SK-N-SH (cell line): ENCODE measurements at regions of chr1 and their contacts with region 1.

Region 1: DNA sequence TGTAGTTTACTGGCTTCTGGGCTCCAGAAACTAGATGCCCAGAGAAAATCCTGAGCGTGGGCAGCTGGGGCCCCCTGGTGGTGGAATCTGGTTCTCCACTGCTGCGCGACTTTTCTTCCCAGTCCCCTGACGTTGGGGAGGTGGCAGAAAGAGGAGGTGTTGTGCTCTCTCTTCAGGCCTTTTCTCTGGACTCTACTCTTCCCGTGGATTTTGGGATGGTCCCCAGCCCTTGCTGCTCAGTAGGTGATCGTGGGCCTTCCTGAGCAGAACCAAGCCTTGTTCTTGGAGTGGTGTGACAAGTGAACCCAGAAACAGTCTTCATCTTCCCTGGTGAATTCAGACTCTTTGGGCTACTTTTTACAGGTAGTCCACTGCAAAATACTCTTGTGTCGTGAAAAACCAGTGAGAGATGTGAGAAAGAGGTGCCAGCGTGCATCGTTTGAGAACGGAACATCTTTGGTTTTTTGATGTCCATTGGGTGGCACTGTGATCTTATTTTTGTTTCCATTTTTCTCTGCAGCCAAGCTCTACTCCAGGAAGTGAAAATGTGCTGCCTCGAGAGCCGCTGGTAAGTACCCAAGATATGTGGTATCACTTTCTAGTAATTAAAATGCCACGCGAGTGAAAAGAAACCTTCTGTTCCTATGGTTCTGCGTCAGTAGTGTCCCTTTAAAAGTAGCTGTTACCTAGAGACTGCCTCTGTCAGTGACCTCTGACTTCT is 20.2 kb downstream of the PEX14 start:
- DNase-seq: peak; percentile 84
- H3K4me3 ChIP-seq: peak overlapping the region in 1 of 2 experiments; percentile 52; a peak in 1 of 4 replicates
- H3K27ac ChIP-seq: peak overlapping the region; percentile 26 to 32; a peak in 2 of 4 replicates
- H3K4me1 ChIP-seq: peaks cover 0 to 10% of the 10 kb centered on the region in 2 experiments; a peak in 1 of 4 replicates
- H3K27me3 ChIP-seq: no peaks in the 10 kb centered on the region
- CTCF ChIP-seq: peak; percentile 97
- EP300 ChIP-seq: no peak
- RAD21 ChIP-seq: peak; percentile 87

Region 2: DNA sequence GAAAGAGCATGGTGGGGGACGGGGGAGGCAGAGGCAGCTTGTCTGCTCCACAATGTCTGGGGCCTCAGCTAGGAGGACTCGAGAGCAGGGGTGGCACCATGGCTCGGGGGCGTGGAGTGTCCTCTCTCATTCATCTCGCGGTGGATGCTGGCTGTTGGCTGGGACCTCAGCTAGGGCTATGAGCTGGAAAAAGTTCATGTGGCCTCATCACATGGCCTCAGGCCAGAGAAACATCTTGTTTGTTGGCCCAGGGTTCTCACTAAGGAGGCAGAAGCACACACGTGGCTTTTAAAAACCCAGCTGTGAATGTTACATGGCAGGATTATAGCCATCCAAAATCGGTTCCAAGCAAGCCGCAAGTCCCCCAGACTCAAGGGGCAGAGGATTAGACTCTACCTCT is 70.9 kb before region 1 on chr1:
- CTCF ChIA-PET with region 1: interaction called, 203 read pairs
- POLR2A ChIA-PET with region 1: no interaction called
- DNase-seq: peak; percentile 44
- H3K4me3 ChIP-seq: no peak overlapping the region
- H3K27ac ChIP-seq: no peak overlapping the region
- H3K4me1 ChIP-seq: peaks cover 0 to 4% of the 10 kb centered on the region in 2 experiments; a peak in 1 of 4 replicates
- H3K27me3 ChIP-seq: no peaks in the 10 kb centered on the region
- CTCF ChIP-seq: no peak
- EP300 ChIP-seq: no peak
- RAD21 ChIP-seq: no peak

Region 3: DNA sequence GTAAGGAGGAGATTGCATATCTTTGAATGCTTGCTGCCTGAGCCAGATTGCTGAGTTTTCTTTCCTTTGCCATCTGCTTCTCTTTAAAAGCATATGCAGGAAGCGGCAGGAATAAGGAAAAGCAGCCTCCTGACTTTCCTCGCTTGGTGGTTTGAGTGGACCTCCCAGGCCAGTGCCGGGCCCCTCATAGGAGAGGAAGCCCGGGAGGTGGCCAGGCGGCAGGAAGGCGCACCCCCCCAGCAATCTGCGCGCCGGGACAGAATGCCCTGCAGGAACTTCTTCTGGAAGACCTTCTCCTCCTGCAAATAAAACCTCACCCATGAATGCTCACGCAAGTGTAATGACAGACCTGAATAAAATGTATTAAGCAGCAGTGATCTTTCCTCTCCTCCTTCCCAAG is 43.6 kb before region 1 on chr1:
- CTCF ChIA-PET with region 1: interaction called, 16 read pairs
- POLR2A ChIA-PET with region 1: no interaction called
- DNase-seq: peak; percentile 65
- H3K4me3 ChIP-seq: peak overlapping the region in 1 of 2 experiments; percentile 45; a peak in 1 of 4 replicates
- H3K27ac ChIP-seq: peak overlapping the region; percentile 39 to 50; a peak in 3 of 4 replicates
- H3K4me1 ChIP-seq: peaks cover 5 to 12% of the 10 kb centered on the region in 2 experiments
- H3K27me3 ChIP-seq: no peaks in the 10 kb centered on the region
- CTCF ChIP-seq: no peak
- EP300 ChIP-seq: no peak
- RAD21 ChIP-seq: no peak

Region 4: GRCh38 chr1:10472220-10473144 is 22.4 kb before region 1 on chr1 and contains the start of gene DFFA:
- CTCF ChIA-PET with region 1: interaction called, 13 read pairs
- POLR2A ChIA-PET with region 1: no interaction called
- DNase-seq: peak; percentile 94
- H3K4me3 ChIP-seq: peak within 1 kb of the TSS; percentile 70 to 85
- H3K27ac ChIP-seq: peak within 1 kb of the TSS; percentile 50 to 72; a peak in 3 of 4 replicates
- H3K4me1 ChIP-seq: peaks cover 8 to 13% of the 10 kb centered on the region in 2 experiments; a peak in 3 of 4 replicates
- H3K27me3 ChIP-seq: no peaks in the 10 kb centered on the region
- CTCF ChIP-seq: no peak
- EP300 ChIP-seq: no peak
- RAD21 ChIP-seq: no peak
- polyA plus RNA-seq, gene DFFA: 42.3 and 54.4 TPM in 2 replicates

Region 5: DNA sequence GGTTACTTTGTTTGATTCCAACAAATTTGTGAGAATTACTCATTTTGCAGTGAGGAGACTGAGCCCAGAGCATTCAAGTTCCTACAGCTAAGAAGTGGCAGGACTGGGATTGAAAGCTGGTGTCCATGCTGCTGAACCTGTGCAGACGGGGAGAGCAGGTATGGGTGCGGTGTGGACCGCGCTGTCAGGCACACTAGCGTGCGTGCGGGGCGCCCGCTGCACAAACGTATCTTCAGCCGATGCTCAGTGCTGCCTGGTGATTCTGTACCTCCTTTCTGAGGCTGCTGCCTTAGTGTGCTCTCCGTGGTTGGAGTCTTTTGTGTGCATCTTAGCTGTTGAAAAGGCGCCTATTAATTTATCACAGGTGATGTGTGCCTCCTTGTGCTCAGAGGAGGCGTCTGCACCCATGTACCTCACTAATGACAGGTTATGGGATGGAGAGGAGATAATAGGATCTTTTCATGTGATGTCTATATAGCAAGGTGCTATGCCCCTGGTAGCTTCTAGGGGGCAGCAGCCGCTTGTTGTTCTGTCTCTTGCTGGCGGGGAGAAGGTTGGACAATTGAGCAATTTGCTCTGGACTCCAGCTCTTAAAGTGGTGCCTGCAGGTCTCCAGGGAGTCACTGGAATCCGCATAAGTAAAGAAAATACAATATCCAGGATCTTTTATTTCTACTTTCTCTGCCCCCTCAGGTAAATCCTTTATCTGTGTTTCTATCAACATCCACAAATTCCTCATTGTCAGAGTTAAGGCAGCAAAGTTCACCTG is 12.4 kb after region 1 on chr1:
- CTCF ChIA-PET with region 1: interaction called, 157 read pairs
- POLR2A ChIA-PET with region 1: interaction called, 4 read pairs
- DNase-seq: peak; percentile 83
- H3K4me3 ChIP-seq: no peak overlapping the region; a peak in 1 of 4 replicates
- H3K27ac ChIP-seq: no peak overlapping the region
- H3K4me1 ChIP-seq: peaks cover 27 to 39% of the 10 kb centered on the region in 2 experiments
- H3K27me3 ChIP-seq: no peaks in the 10 kb centered on the region
- CTCF ChIP-seq: peak; percentile 87
- EP300 ChIP-seq: no peak
- RAD21 ChIP-seq: peak; percentile 90

Region 6: DNA sequence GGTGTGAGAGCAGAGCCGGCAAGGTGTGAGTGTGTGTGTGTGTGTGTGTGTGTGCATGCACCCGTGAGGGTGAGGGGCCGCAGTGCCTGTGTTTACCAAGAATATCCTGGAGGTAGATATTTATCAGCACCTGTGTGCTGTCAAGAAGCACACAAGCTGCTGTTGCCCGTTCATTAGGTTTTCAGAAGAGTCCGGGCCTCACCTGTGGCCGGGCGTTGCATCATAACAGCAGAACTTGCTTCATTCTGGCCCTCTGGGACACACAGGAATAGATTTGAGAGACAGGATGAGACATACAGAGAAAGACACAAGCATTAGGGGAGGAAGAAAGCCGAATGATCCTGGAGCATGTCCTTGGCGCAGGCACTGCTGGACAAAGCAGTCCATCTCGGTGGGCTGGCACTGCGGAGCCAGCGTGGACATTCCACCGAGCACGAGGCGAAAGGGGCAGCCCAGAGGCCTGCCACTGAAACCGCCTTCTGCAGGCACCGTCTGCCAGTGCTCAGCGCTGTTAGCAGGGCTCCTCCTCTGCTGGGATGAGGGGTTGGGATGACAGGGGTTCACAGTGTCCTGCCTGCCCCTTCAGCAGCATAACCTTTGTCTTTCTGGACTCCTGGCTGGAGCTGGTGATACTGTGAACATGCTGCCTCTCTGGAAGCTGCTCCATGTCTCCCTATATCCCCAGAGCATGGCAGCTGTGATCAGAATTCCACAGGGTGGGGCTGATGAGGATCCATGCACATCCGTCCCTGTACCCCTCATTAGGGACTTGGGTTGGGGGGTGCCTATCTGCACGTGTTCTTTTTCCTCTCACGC is 60.9 kb after region 1 on chr1:
- CTCF ChIA-PET with region 1: no interaction called
- POLR2A ChIA-PET with region 1: no interaction called
- DNase-seq: no peak
- H3K4me3 ChIP-seq: no peak overlapping the region
- H3K27ac ChIP-seq: peak overlapping the region in 1 of 2 experiments; percentile 3; a peak in 1 of 4 replicates
- H3K4me1 ChIP-seq: peaks cover 0 to 20% of the 10 kb centered on the region in 2 experiments; a peak in 1 of 4 replicates
- H3K27me3 ChIP-seq: no peaks in the 10 kb centered on the region
- CTCF ChIP-seq: no peak
- EP300 ChIP-seq: no peak
- RAD21 ChIP-seq: no peak

Region 7: DNA sequence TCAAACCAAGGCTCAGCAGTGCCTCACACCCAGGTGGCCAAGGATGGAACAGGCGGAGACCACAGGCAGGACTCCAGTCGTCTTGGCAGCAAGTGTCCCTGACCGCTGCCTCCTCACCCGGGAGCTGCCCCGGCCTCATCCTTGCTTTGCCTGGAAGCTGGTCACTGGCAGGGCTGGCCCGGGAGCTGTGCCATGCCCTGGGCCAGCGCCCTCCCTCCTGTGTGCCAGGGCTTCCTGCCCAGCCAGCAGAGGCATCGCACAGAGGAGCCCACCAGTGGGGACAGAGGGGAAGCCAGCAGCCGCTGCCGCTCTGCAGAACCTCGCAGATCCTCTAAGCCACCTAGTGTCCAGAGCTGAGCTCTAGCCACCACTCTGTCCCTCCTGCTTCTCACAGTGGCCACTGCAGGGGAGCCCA is 293.7 kb after region 1 on chr1:
- CTCF ChIA-PET with region 1: interaction called, 11 read pairs
- POLR2A ChIA-PET with region 1: no interaction called
- DNase-seq: peak; percentile 86
- H3K4me3 ChIP-seq: no peak overlapping the region
- H3K27ac ChIP-seq: no peak overlapping the region
- H3K4me1 ChIP-seq: peaks cover 3 to 10% of the 10 kb centered on the region in 2 experiments; a peak in 2 of 4 replicates
- H3K27me3 ChIP-seq: peaks cover 51% of the 10 kb centered on the region
- CTCF ChIP-seq: no peak
- EP300 ChIP-seq: no peak
- RAD21 ChIP-seq: peak; percentile 74

Region 8: GRCh38 chr1:10873189-10873588 is 378.3 kb after region 1 on chr1:
- CTCF ChIA-PET with region 1: interaction called, 17 read pairs
- POLR2A ChIA-PET with region 1: no interaction called
- DNase-seq: no peak
- H3K4me3 ChIP-seq: no peak overlapping the region
- H3K27ac ChIP-seq: no peak overlapping the region
- H3K4me1 ChIP-seq: peaks cover 0 to 2% of the 10 kb centered on the region in 2 experiments; a peak in 1 of 4 replicates
- H3K27me3 ChIP-seq: no peaks in the 10 kb centered on the region
- CTCF ChIP-seq: no peak
- EP300 ChIP-seq: no peak
- RAD21 ChIP-seq: no peak